PC-3 (cell line): ENCODE measurements at regions of chr14 and their contacts with region 1.

Region 1: DNA sequence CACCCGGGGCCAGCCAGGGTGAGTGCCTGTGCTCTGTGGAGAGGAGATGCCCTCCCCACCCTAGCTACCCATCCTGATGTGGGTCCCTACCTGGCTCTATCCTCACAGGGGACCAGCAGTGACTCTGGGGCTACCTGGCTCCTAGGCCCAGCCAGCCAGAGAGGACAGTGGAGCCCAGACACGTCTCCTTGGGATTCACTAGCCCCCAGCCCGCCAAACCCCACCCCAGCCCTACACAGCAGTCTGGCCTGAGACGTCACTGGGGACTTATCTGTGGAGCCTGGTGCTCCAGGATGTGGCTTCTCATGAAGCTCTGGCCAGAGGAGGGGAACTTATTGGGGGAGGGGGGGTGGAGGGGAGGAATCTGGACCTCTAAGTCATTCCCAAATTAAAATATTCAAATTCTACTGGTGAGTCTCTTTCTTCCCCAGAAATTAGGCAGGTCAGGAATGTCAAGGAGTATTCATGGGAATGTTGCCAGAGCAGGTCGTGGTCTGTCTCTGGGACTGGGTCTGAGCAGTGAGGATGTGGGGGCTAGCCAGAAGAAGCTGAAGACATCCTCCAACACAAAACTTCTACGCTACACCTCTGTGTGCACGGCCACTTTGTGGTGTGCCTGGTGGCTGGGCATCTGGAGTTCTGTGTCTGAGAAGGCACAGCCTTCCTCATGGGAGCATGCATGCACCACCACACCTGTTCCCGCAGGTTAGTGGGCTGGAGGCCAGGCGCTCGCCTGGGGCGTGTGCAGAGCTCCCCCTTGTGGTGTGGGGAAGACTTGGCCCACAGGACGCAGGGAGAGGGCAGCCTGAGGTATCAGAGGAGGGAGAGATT is 2.7 kb downstream of the CMTM5 start:
- DNase-seq: peak; percentile 81
- ATAC-seq: peak; percentile 91
- H3K4me3 ChIP-seq: no peak overlapping the region
- H3K27ac ChIP-seq: no peak overlapping the region
- H3K4me1 ChIP-seq: no peaks in the 10 kb centered on the region
- H3K27me3 ChIP-seq: peaks cover 27% of the 10 kb centered on the region
- CTCF ChIP-seq: peak; percentile 94

Region 2: GRCh38 chr14:23269193-23269592 is 110.4 kb before region 1 on chr14:
- CTCF ChIA-PET with region 1: no interaction called
- POLR2A ChIA-PET with region 1: no interaction called
- intact Hi-C with region 1: loop called (anchors 1 kb)
- DNase-seq: no peak
- ATAC-seq: no peak
- H3K4me3 ChIP-seq: no peak overlapping the region
- H3K27ac ChIP-seq: no peak overlapping the region
- H3K4me1 ChIP-seq: no peaks in the 10 kb centered on the region
- H3K27me3 ChIP-seq: 0 out of 2 replicates have a peak, but pooled peaks cover 3% of the 10 kb centered on the region
- CTCF ChIP-seq: no peak

Region 3: DNA sequence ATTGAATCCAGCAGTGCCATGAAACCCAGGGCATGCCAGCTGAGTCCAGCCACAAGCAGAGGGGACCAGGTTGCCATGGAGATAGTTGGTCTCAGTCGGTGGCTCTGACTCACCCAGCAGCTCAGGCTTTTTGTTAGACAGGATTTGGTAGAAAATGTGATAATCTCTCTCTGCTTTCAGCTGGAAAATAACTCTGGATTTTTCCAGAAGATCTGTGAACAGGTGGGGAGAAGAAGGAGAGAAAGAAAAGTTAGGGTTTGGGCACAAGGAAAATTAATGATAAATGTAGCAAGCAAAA is 51.2 kb after region 1 on chr14:
- CTCF ChIA-PET with region 1: no interaction called
- POLR2A ChIA-PET with region 1: no interaction called
- intact Hi-C with region 1: no loop called
- DNase-seq: no peak
- ATAC-seq: no peak
- H3K4me3 ChIP-seq: no peak overlapping the region
- H3K27ac ChIP-seq: no peak overlapping the region
- H3K4me1 ChIP-seq: no peaks in the 10 kb centered on the region
- H3K27me3 ChIP-seq: peaks cover 54% of the 10 kb centered on the region
- CTCF ChIP-seq: no peak